CD8-positive, alpha-beta T cell (primary cell): ENCODE measurements at regions of chr11 and their contacts with region 1.

Region 1: GRCh38 chr11:13525257-13525656 is 29.5 kb upstream of the PTH start:
- DNase-seq: no peak
- ATAC-seq: no peak
- H3K4me3 ChIP-seq: no peak overlapping the region
- H3K4me3 Mint-ChIP-seq: no peak overlapping the region
- H3K27ac ChIP-seq: no peak overlapping the region
- H3K27ac Mint-ChIP-seq: no peak overlapping the region
- H3K4me1 ChIP-seq: no peaks in the 10 kb centered on the region
- H3K4me1 Mint-ChIP-seq: no peaks in the 10 kb centered on the region
- H3K27me3 ChIP-seq: no peaks in the 10 kb centered on the region
- H3K27me3 Mint-ChIP-seq: peaks cover 7% of the 10 kb centered on the region
- CTCF ChIP-seq: no peak

Region 2: GRCh38 chr11:13552583-13553183 is 27.4 kb after region 1 on chr11:
- CTCF ChIA-PET with region 1: no interaction called
- POLR2A ChIA-PET with region 1: no interaction called
- intact Hi-C with region 1: loop called in 1 of 2 experiments (anchors 1 kb)
- DNase-seq: no peak
- ATAC-seq: no peak
- H3K4me3 ChIP-seq: no peak overlapping the region
- H3K4me3 Mint-ChIP-seq: no peak overlapping the region
- H3K27ac ChIP-seq: no peak overlapping the region
- H3K27ac Mint-ChIP-seq: no peak overlapping the region
- H3K4me1 ChIP-seq: peaks cover 9% of the 10 kb centered on the region
- H3K4me1 Mint-ChIP-seq: no peaks in the 10 kb centered on the region
- H3K27me3 ChIP-seq: no peaks in the 10 kb centered on the region
- H3K27me3 Mint-ChIP-seq: peaks cover 2% of the 10 kb centered on the region
- CTCF ChIP-seq: no peak